IMR-90 (cell line): ENCODE measurements at regions of chr20 and their contacts with region 1.

Region 1: DNA sequence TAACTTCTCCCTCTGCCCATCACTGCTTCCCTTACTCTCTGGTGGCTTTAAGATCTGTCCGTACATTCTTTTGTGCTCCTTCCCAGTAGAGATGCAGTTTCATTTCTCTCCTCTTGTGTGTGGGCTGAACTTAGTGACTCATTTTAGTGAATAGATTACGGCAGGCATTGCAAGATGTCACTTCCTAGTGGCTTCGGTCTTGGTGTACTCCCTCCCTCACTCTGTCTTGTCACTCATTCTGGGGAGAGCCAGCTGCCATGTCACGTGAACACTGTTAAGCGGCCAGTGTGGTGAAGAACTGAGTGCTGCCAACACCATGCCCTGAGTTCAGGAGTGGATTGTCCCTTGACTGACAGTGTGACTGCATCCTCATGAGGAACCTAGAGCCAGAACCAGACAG is 115.9 kb downstream of the OTOR start:
- DNase-seq: peak; percentile 20
- ATAC-seq: peak; percentile 54
- H3K4me3 ChIP-seq: no peak overlapping the region
- H3K27ac ChIP-seq: no peak overlapping the region
- H3K4me1 ChIP-seq: no peaks in the 10 kb centered on the region
- H3K27me3 ChIP-seq: no peaks in the 10 kb centered on the region
- CTCF ChIP-seq: no peak
- POLR2A ChIP-seq: no peak
- RAD21 ChIP-seq: no peak

Region 2: GRCh38 chr20:16904750-16905149 is 40.7 kb after region 1 on chr20:
- CTCF ChIA-PET with region 1: no interaction called
- POLR2A ChIA-PET with region 1: no interaction called
- dilution Hi-C with region 1: no loop called
- in situ Hi-C with region 1: no loop called
- intact Hi-C with region 1: loop called (anchors 1 kb)
- DNase-seq: no peak
- ATAC-seq: no peak
- H3K4me3 ChIP-seq: no peak overlapping the region
- H3K27ac ChIP-seq: no peak overlapping the region
- H3K4me1 ChIP-seq: no peaks in the 10 kb centered on the region
- H3K27me3 ChIP-seq: no peaks in the 10 kb centered on the region
- CTCF ChIP-seq: no peak
- POLR2A ChIP-seq: no peak
- RAD21 ChIP-seq: no peak

Region 3: DNA sequence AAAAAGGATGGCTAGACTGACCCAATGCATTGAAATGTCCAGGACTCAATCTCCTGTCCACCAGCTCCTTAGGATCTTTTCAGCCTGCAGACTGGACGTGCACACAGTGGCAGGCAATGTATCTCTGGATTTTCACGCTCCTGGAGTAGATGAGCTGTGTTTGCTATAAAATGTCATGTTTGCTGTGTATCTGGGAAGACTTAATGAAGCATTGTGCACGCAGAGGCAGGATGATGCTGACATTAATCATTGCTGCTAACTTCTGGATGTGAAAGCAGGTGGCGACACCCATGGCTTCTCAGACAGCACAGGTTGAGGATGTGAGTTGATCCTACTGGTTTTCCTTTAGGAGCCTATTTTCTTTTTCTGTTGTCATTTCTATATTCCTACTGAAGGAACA is 229.7 kb after region 1 on chr20:
- CTCF ChIA-PET with region 1: no interaction called
- POLR2A ChIA-PET with region 1: no interaction called
- dilution Hi-C with region 1: no loop called
- in situ Hi-C with region 1: no loop called
- intact Hi-C with region 1: no loop called
- DNase-seq: no peak
- ATAC-seq: no peak
- H3K4me3 ChIP-seq: no peak overlapping the region
- H3K27ac ChIP-seq: no peak overlapping the region
- H3K4me1 ChIP-seq: no peaks in the 10 kb centered on the region
- H3K27me3 ChIP-seq: no peaks in the 10 kb centered on the region
- CTCF ChIP-seq: no peak
- POLR2A ChIP-seq: no peak
- RAD21 ChIP-seq: no peak